MCF 10A (cell line): ENCODE measurements at regions of chr1 and their contacts with region 1.

Region 1: GRCh38 chr1:28088168-28088961 is at the start of gene EYA3:
- DNase-seq: peak; percentile 98
- H3K4me3 Mint-ChIP-seq: peak within 1 kb of the TSS; percentile 97
- H3K27ac Mint-ChIP-seq: peak within 1 kb of the TSS; percentile 98
- H3K4me1 Mint-ChIP-seq: peaks cover 26% of the 10 kb centered on the region
- H3K27me3 Mint-ChIP-seq: no peaks in the 10 kb centered on the region
- CTCF ChIP-seq: no peak
- total RNA-seq, gene EYA3: 13.3 and 14.4 TPM in 2 replicates

Region 2: GRCh38 chr1:27643701-27644625 is 444.4 kb before region 1 on chr1:
- CTCF ChIA-PET with region 1: no interaction called
- POLR2A ChIA-PET with region 1: no interaction called
- intact Hi-C with region 1: no loop called
- DNase-seq: peak; percentile 70
- H3K4me3 Mint-ChIP-seq: no peak overlapping the region
- H3K27ac Mint-ChIP-seq: no peak overlapping the region
- H3K4me1 Mint-ChIP-seq: peaks cover 7% of the 10 kb centered on the region
- H3K27me3 Mint-ChIP-seq: no peaks in the 10 kb centered on the region
- CTCF ChIP-seq: peak; percentile 62

Region 3: DNA sequence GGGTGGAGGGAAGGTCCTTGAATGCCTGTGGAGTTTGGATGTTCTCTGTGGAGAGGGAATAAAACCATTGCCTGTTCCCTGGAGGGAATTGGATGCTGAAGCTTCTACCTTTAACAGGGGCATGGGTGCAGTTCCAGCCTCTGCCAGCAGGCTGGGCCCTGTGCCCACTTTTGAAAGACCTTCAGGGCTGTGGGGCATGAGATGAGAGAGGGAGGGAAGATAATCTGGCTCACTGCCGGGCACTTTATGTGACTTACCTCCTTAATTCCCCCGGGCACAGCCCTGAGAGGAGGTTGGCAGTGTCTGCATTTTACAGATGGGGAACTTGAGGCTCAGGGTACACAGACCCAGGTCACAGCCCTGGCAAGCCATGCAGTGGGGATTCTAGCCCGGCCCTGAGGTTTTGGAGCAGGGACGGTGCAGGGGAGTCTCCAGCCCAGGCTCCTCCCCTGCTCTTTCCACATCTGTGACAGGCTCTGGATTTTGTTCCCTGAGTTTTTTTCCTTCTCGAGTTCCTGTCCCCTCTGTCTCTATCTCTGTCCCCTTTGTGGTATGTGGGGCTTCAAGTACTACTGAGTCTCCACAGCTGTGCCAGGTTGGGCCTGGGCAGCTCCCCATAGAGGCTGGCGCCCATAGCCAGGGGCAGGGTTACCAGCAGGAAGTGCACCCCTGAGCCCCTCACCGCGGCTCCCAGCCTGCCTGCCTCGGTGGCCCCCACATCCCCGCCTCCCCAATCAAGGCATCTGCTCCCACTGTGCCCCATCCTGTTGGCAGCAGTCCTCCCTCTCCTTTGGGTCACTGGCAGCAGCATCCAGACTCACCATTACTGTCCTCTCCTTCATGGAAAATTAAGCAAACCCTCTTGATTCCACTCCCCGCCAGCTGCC is 230.1 kb before region 1 on chr1:
- CTCF ChIA-PET with region 1: interaction called, 3 read pairs
- POLR2A ChIA-PET with region 1: interaction called, 4 read pairs
- intact Hi-C with region 1: loop called (anchors 2 kb)
- DNase-seq: peak; percentile 91
- H3K4me3 Mint-ChIP-seq: peak overlapping the region; percentile 38
- H3K27ac Mint-ChIP-seq: peak overlapping the region; percentile 84
- H3K4me1 Mint-ChIP-seq: peaks cover 23% of the 10 kb centered on the region
- H3K27me3 Mint-ChIP-seq: no peaks in the 10 kb centered on the region
- CTCF ChIP-seq: peak; percentile 97

Region 4: DNA sequence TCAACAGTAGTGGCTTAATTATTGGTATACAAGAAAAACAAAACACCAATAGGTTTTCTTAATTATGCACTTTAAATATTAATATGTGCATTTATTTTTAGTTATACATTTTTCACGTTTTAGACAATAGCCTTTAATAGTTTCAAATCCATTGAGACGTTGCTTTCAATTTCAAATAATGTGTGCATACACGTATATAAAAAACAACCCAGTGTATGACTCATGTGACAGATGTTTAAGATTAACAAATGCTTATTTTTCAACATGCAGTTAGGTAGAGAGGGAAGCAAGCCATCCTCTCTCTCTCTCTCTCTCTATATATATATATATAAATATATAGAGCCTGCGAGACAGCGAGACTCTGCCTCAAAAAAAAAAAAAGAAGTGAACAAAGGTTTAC is 24.3 kb before region 1 on chr1:
- CTCF ChIA-PET with region 1: interaction called, 4 read pairs
- POLR2A ChIA-PET with region 1: interaction called, 78 read pairs
- intact Hi-C with region 1: loop called (anchors 2 kb)
- DNase-seq: peak; percentile 61
- H3K4me3 Mint-ChIP-seq: peak overlapping the region; percentile 23
- H3K27ac Mint-ChIP-seq: no peak overlapping the region
- H3K4me1 Mint-ChIP-seq: peaks cover 24% of the 10 kb centered on the region
- H3K27me3 Mint-ChIP-seq: no peaks in the 10 kb centered on the region
- CTCF ChIP-seq: no peak

Region 5: DNA sequence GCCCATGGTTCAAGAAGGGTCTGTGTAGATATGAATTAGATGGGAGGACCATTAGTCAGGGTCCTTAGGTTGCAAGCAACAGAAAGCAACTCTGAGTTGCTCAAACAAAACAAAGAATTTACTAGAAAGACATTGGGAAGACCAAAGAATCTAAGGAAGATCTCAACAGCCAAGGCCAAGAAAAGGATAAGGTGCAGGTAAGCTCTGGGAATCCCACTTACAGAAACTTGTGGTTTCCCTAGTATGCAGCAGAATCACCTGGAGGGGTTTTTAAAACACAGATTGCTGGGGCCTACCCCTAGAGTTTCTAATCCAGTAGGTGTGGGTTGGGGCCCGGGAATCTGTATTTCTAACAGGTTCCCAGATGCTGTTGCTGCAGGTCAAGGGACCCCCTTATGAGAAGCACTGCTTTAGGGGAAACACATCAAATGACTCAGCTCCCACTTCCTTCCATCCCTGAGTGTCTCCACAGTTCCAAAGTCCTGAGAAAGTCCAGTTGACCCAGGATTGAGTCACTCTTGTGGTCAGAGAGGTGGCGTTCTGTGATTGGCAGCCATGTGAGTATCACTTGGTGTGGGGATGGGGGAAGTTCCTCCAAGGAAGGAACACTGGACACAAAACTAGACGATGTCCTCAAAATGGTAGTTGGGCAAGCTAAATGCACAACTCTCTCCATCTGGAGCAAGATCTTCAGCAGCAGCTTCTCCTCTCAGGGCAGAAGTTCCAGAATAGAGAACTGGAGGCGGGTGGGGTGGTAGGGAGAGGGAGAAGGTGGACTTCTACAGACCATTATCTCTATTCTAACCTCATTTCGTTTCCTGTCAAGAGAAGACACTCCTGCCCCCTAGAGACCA is 24.2 kb after region 1 on chr1:
- CTCF ChIA-PET with region 1: interaction called, 11 read pairs
- POLR2A ChIA-PET with region 1: no interaction called
- intact Hi-C with region 1: no loop called
- DNase-seq: peak; percentile 64
- H3K4me3 Mint-ChIP-seq: no peak overlapping the region
- H3K27ac Mint-ChIP-seq: no peak overlapping the region
- H3K4me1 Mint-ChIP-seq: peaks cover 9% of the 10 kb centered on the region
- H3K27me3 Mint-ChIP-seq: no peaks in the 10 kb centered on the region
- CTCF ChIP-seq: peak; percentile 29

Region 6: DNA sequence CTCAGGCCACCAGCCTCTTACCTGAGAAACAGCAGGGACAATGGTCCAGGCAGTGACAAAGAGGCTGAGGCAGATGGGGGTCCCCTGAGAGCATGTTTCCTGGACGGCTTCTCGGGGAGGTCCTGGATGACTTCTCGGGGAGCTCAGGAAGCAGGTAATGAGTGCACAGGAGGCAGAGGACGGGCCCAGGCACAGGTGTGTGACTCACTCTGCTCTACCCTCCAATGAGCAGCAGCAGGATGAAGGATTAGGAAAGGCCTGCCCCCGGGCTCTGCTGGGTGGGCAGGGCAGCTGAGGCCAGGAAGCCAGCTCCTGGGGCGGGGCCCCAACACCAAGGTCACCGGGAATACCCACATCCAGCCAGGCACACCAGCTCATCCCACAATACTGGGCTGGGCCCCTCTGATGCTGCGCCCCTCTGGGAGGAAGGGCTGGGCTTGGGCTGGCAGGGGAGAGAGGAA is 105.4 kb after region 1 on chr1:
- CTCF ChIA-PET with region 1: interaction called, 47 read pairs
- POLR2A ChIA-PET with region 1: interaction called, 33 read pairs
- intact Hi-C with region 1: no loop called
- DNase-seq: peak; percentile 93
- H3K4me3 Mint-ChIP-seq: peak overlapping the region; percentile 54
- H3K27ac Mint-ChIP-seq: no peak overlapping the region
- H3K4me1 Mint-ChIP-seq: peaks cover 23% of the 10 kb centered on the region
- H3K27me3 Mint-ChIP-seq: no peaks in the 10 kb centered on the region
- CTCF ChIP-seq: no peak

Region 7: DNA sequence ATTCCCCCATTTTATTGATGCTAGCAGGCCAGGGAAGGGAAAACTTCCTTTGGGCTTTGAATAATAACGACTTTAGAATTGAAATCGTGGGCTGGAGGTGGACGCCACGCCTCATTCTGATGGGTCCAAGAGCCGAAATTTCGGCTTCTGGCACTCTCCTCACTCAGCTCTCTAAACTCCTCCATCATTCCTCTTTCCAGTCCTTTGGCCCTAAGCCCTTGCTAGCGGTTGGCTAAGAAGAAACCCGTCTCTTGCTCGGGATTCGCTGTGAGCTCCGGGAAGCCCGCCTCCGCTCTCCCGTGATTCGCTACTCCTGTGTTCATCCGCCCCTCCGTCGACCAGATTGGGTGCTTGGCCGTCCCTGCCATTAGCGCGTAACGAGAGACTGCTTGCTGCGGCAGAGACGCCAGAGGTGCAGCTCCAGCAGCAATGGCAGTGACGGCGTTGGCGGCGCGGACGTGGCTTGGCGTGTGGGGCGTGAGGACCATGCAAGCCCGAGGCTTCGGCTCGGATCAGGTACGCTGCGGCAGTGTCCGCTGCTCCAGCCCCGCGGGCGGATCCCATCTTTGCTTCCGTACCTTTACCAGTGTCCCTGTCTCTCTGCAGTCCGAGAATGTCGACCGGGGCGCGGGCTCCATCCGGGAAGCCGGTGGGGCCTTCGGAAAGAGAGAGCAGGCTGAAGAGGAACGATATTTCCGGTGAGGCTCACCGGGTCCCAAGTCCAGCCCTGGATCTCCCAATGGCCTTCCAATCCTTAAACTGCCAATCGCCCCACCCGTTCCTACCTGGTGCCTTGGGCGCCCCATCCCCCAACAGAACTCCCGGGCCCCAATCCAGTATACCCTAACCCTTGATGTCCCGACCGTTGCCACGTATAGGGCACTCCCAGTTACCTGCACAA is 147.6 kb after region 1 on chr1 and contains the start of gene ATP5IF1:
- CTCF ChIA-PET with region 1: no interaction called
- POLR2A ChIA-PET with region 1: interaction called, 17 read pairs
- intact Hi-C with region 1: no loop called
- DNase-seq: peak; percentile 99
- H3K4me3 Mint-ChIP-seq: no peak within 1 kb of the TSS
- H3K27ac Mint-ChIP-seq: no peak within 1 kb of the TSS
- H3K4me1 Mint-ChIP-seq: no peaks in the 10 kb centered on the region
- H3K27me3 Mint-ChIP-seq: no peaks in the 10 kb centered on the region
- CTCF ChIP-seq: no peak
- total RNA-seq, gene ATP5IF1: 214 and 232 TPM in 2 replicates